GM12878 (cell line): ENCODE measurements at regions of chr13 and their contacts with region 1.

Region 1: DNA sequence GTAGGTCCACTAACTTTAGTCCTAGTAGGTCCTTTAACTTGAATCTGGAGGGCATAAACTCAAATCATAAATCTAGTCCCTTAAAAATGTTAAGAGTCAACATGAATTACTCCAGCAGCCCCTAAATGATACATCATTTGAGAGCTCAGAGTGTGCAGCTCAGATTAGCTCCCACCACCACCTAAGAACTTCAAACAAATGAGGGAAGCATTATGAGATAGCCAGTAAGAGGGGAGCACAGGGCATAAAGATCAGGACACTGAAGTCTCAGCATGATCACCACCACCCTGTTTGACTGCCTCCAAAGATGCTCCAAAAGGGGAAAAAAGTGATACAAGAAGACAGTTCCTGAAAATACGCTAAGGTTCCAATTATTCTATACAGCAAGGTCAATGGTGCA is 5.7 kb downstream of the PROSER1 start:
- DNase-seq: no peak
- ATAC-seq: peak; percentile 5; the same call in 1 of the 3 replicates
- H3K4me3 ChIP-seq: no peak overlapping the region
- H3K27ac ChIP-seq: no peak overlapping the region
- H3K4me1 ChIP-seq: no peaks in the 10 kb centered on the region; the same call in 1 of the 2 replicates
- H3K27me3 ChIP-seq: no peaks in the 10 kb centered on the region
- CTCF ChIP-seq: no peak
- EP300 ChIP-seq: no peak
- POLR2A ChIP-seq: no peak
- RAD21 ChIP-seq: no peak

Region 2: DNA sequence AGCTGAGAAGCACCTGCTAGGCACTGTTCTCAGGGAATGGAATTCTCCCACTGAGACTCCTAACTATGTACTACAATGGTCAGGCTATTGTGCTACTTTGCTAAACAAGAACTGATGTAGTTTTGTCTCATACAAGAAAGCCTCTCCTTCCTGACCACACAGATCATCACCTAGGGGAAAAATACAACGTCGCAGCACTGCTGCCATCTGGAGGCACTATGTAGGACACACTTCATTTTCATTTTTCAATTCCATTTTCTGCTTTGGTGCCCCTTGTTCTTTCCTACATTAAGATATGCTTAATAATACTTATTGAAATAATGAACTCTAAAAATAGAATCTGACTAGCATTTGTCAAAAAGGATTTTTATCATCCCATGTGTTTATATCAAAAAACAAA is 15.4 kb before region 1 on chr13:
- CTCF ChIA-PET with region 1: interaction called, 13 read pairs
- POLR2A ChIA-PET with region 1: interaction called, 8 read pairs
- RAD21 ChIA-PET with region 1: interaction called, 12 read pairs
- SMC1A ChIA-PET with region 1: interaction called, 8 read pairs
- in situ Hi-C with region 1: no loop called
- intact Hi-C with region 1: no loop called
- DNase-seq: no peak
- ATAC-seq: peak; percentile 86
- H3K4me3 ChIP-seq: no peak overlapping the region
- H3K27ac ChIP-seq: peak overlapping the region; percentile 20; the same call in 1 of the 2 replicates
- H3K4me1 ChIP-seq: no peaks in the 10 kb centered on the region
- H3K27me3 ChIP-seq: no peaks in the 10 kb centered on the region
- CTCF ChIP-seq: peak; percentile 61 to 66 (median 65)
- EP300 ChIP-seq: no peak
- POLR2A ChIP-seq: no peak
- RAD21 ChIP-seq: peak; percentile 52

Region 3: GRCh38 chr13:39051157-39051556 is 19.0 kb after region 1 on chr13:
- CTCF ChIA-PET with region 1: interaction called, 10 read pairs
- POLR2A ChIA-PET with region 1: interaction called, 3 read pairs
- RAD21 ChIA-PET with region 1: interaction called, 4 read pairs
- SMC1A ChIA-PET with region 1: interaction called, 6 read pairs
- in situ Hi-C with region 1: no loop called
- intact Hi-C with region 1: no loop called
- DNase-seq: no peak
- ATAC-seq: peak; percentile 54
- H3K4me3 ChIP-seq: no peak overlapping the region
- H3K27ac ChIP-seq: no peak overlapping the region
- H3K4me1 ChIP-seq: no peaks in the 10 kb centered on the region
- H3K27me3 ChIP-seq: no peaks in the 10 kb centered on the region
- CTCF ChIP-seq: peak; percentile 27 to 55 (median 31); a peak in 4 of 6 replicates
- EP300 ChIP-seq: no peak
- POLR2A ChIP-seq: no peak
- RAD21 ChIP-seq: peak; percentile 76